ENCODE measurements at regions of chr18 and their contacts with region 1.

Region 1: DNA sequence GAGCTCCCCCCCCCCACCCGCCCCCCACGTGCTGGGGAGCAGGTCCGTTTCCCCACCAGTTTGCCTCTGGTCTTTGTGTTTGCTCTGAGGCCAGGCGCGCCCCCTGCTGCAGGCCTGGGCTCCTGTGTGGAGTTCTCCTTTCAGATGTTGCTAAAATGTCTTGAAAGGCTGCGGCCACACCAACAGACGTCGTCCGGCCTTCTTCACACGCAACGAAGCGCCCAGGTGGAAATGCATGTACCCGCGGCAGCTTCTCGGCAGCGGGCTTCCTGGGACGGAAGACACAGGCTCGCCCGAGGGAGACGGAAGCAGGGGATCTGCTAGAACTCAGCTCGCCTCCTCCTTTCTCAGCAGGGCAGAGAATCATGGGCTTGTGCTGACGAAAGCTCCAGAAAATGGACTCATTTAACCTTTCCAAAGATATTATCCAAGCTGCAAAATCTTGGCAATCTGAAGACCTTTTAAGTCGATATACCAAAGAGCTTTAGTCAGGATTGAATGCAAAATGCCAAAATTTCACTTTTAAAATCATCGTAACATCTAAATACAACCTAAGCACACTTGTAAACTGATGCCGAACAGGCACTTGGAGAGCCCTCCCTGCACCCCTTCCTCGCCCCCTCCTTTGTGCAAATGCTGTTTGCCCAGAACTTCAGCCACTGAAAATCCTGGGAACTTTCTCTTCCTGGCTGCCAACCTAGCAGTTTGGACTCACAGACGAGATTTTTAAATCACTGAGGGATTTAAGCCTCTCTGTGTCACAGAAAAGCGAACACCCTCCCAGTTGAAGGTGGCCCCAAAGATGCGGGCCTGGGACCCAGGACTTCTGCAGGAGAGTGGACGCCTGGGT is 125.5 kb upstream of the ZNF516 start:
- DNase-seq: peak; percentile 94
- H3K4me3 ChIP-seq: peak overlapping the region; percentile 45 to 60 (median 53)
- H3K27ac ChIP-seq: peak overlapping the region; percentile 72 to 80 (median 76)
- H3K4me1 ChIP-seq: peaks cover 23 to 35% (median 33%) of the 10 kb centered on the region in 4 donors
- H3K27me3 ChIP-seq: no peaks in the 10 kb centered on the region
- CTCF ChIP-seq: peak; percentile 50 to 78 (median 67)
- EP300 ChIP-seq: no peak
- POLR2A ChIP-seq: no peak

Region 2: GRCh38 chr18:76080430-76080829 is 540.1 kb before region 1 on chr18:
- intact Hi-C with region 1: no loop called
- DNase-seq: no peak
- H3K4me3 ChIP-seq: no peak overlapping the region
- H3K27ac ChIP-seq: no peak overlapping the region
- H3K4me1 ChIP-seq: no peaks in the 10 kb centered on the region
- H3K27me3 ChIP-seq: peaks cover 0 to 5% (median 0%) of the 10 kb centered on the region in 4 donors
- CTCF ChIP-seq: no peak
- EP300 ChIP-seq: no peak
- POLR2A ChIP-seq: no peak

Region 3: DNA sequence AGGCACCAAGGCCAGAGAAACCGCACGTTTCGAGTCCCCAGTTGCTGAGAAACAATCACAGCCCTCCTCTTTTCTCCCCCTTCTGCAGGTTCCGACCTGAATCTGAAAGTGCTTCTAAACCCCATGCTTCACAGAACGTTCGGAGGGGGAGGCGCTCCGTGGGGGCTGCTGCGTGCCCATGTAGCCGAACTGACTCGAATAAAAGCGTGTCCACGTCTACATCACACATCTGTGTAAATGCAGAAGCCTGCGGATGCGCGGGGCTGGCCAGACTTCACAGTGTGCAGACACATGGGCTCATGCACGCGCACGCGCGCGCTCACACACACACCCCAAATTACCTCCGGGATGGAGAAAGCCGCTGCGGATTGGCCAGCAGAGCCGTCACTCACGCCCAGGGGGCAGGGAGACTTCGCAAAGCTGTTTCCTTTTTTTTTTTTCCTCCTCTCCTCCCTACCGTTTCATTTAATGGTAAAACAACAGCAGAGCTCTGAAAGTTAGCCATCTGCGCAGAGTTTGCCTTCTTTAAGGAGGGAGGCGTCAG is 127.8 kb before region 1 on chr18:
- intact Hi-C with region 1: loop called (anchors 10 kb)
- DNase-seq: peak; percentile 99
- H3K4me3 ChIP-seq: peak overlapping the region; percentile 71 to 89 (median 83)
- H3K27ac ChIP-seq: peak overlapping the region; percentile 86 to 91 (median 90)
- H3K4me1 ChIP-seq: peaks cover 16 to 56% (median 43%) of the 10 kb centered on the region in 4 donors
- H3K27me3 ChIP-seq: no peaks in the 10 kb centered on the region
- CTCF ChIP-seq: no peak
- EP300 ChIP-seq: no peak
- POLR2A ChIP-seq: no peak

Region 4: DNA sequence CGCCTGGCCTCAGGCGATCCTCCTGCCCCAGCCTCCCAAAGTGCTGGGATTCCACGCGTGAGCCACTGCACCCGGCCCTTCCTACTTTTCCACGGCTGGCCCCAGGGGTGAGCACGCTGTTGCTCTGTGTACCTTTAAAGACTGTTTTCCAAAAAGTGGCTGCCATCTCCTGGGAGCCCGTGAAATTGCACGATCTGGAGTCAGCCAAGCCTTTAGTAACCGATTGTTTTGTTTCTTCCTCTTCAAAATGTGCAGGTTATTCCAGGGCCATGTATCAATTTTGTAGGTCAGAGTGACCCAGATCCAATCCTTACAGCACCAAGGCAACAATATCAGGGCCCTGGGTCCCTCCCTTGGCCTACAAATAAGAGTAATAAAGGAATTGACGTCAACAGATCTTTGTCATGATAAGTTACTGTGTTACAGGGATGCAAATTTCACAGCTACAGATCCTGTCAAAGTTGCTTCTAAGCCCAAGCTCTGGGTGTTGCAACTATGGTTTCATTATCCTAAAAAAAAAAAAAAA is 66.3 kb after region 1 on chr18:
- intact Hi-C with region 1: loop called (anchors 5 kb)
- DNase-seq: no peak
- H3K4me3 ChIP-seq: no peak overlapping the region
- H3K27ac ChIP-seq: peak overlapping the region in 2 of 4 donors; percentile 23 to 36
- H3K4me1 ChIP-seq: peaks cover 3 to 13% (median 8%) of the 10 kb centered on the region in 4 donors
- H3K27me3 ChIP-seq: peaks cover 0 to 27% (median 0%) of the 10 kb centered on the region in 4 donors
- CTCF ChIP-seq: peak; percentile 58 to 75 (median 59)
- EP300 ChIP-seq: no peak
- POLR2A ChIP-seq: no peak

Measured in esophagus muscularis mucosa (tissue), 4 donors.